Astrocyte of the cerebellum (primary cell): ENCODE measurements at regions of chr18 and their contacts with region 1.

Region 1: GRCh38 chr18:3451183-3451988 is 1.4 kb downstream of the TGIF1 start:
- DNase-seq: peak; percentile 85
- H3K4me3 ChIP-seq: peak overlapping the region; percentile 99
- CTCF ChIP-seq: no peak

Region 2: GRCh38 chr18:3391704-3392466 is 59.5 kb before region 1 on chr18:
- in situ Hi-C with region 1: loop called (anchors 5 kb)
- DNase-seq: no peak
- H3K4me3 ChIP-seq: no peak overlapping the region
- CTCF ChIP-seq: no peak

Region 3: DNA sequence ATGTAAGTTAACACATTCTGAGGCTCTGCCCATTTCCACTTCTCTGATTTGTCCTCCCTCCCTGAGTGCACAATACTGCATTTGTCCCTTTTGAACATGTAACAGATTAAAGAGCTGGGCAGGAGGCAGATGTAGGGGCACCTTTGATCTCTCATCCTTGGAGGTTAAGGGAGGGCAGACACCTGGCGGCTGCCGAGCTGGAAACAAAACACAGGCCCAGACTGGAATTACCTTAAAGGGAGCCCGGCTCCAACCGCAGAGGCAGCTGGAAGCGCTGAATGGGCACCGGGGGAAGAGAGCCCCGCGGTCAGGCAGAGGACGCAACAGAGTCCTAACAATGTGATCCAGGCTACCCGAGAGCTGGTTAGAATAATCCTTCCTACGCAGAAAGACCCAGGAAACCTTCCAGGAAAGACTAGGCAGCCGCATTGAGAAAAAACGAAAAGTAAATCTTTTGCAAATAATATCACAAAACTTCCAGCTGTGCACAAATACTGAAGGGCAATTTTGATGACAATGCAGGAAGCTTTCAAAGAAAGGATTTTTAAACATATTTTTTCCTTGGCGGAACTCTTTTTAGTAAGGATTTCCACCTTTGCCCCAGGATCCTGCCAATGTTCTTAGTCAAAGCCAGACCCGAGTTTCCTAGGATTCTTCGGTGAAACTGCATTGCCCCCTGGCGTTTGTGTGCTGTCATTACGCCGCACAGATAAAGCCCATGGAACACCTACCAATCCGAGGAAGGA is 214.6 kb after region 1 on chr18:
- in situ Hi-C with region 1: loop called (anchors 5 kb)
- DNase-seq: peak; percentile 86
- H3K4me3 ChIP-seq: peak overlapping the region; percentile 1
- CTCF ChIP-seq: peak; percentile 93